Cardiac septum (tissue), 1 donor: ENCODE measurements at regions of chr12 and their contacts with region 1.

Region 1: DNA sequence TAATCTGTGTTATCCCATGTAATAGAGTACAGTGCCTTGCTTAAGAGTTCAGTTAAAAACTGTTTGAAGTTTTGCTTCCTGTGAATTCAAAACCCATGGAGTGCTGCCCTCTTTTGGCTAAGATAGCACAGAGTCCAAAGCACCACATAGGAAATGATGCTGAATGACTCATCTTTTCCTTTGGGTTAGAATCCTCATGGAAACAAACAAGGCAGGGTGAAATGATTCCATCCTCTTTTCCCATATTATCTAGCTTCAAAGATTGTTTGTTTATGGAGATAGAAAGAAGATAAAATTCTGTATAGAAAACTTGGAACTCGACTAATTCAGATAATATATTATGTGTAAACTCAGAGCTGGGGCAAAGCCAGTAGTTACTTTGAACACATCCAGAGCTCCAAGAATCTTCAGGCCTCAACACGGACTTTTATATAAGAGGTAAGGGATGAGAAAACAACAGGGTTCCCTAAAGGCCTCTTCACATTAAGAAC is 87.4 kb downstream of the OTOGL start:
- DNase-seq: no peak

Region 2: GRCh38 chr12:79844693-79845092 is 342.1 kb before region 1 on chr12:
- intact Hi-C with region 1: loop called (anchors 10 kb)
- DNase-seq: no peak

Region 3: GRCh38 chr12:80056845-80057244 is 129.9 kb before region 1 on chr12:
- intact Hi-C with region 1: loop called (anchors 2 kb)
- DNase-seq: no peak